ENCODE measurements at regions of chr9 and their contacts with region 1.

Region 1: GRCh38 chr9:27019589-27019988 is 14.1 kb upstream of the LRRC19 start:
- DNase-seq: peak; percentile 87
- ATAC-seq: peak; percentile 85
- H3K4me3 ChIP-seq: no peak overlapping the region
- H3K27ac ChIP-seq: no peak overlapping the region; the same call in 1 of the 2 replicates
- H3K4me1 ChIP-seq: no peaks in the 10 kb centered on the region
- H3K27me3 ChIP-seq: no peaks in the 10 kb centered on the region
- CTCF ChIP-seq: no peak
- POLR2A ChIP-seq: no peak
- RAD21 ChIP-seq: no peak

Region 2: DNA sequence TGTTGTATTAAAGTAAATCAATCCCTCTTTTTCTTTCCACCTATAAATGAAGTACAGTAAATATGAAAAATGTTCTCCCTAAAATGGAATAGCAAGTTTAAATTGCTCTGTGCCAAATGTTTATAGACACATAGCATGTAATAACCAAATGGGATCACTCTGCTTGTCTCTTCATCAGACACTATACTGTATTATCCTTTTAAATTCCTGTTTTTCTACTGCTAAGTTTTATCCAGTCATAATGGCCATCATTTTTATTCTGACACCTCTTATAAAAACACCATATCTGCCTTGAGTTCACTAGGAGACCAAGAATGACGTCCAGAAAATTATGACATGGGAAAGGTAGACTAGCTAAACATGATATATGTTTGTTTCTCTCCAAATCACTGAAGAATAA is 379.8 kb before region 1 on chr9:
- CTCF ChIA-PET with region 1: no interaction called
- POLR2A ChIA-PET with region 1: no interaction called
- dilution Hi-C with region 1: no loop called
- in situ Hi-C with region 1: no loop called
- intact Hi-C with region 1: no loop called
- DNase-seq: no peak
- ATAC-seq: no peak
- H3K4me3 ChIP-seq: no peak overlapping the region
- H3K27ac ChIP-seq: no peak overlapping the region
- H3K4me1 ChIP-seq: no peaks in the 10 kb centered on the region
- H3K27me3 ChIP-seq: no peaks in the 10 kb centered on the region
- CTCF ChIP-seq: no peak
- POLR2A ChIP-seq: no peak
- RAD21 ChIP-seq: no peak

Region 3: GRCh38 chr9:26955921-26956859 is 63.4 kb before region 1 on chr9 and contains the start of gene IFT74:
- CTCF ChIA-PET with region 1: no interaction called
- POLR2A ChIA-PET with region 1: no interaction called
- dilution Hi-C with region 1: no loop called
- in situ Hi-C with region 1: no loop called
- intact Hi-C with region 1: loop called (anchors 10 kb)
- DNase-seq: peak; percentile 98
- ATAC-seq: peak; percentile 100
- H3K4me3 ChIP-seq: peak within 1 kb of the TSS; percentile 67
- H3K27ac ChIP-seq: peak within 1 kb of the TSS; percentile 92
- H3K4me1 ChIP-seq: no peaks in the 10 kb centered on the region
- H3K27me3 ChIP-seq: no peaks in the 10 kb centered on the region
- CTCF ChIP-seq: no peak
- POLR2A ChIP-seq: peak; percentile 82
- RAD21 ChIP-seq: no peak
- total RNA-seq, gene IFT74: 11.9 and 12.2 TPM in 2 replicates

Region 4: DNA sequence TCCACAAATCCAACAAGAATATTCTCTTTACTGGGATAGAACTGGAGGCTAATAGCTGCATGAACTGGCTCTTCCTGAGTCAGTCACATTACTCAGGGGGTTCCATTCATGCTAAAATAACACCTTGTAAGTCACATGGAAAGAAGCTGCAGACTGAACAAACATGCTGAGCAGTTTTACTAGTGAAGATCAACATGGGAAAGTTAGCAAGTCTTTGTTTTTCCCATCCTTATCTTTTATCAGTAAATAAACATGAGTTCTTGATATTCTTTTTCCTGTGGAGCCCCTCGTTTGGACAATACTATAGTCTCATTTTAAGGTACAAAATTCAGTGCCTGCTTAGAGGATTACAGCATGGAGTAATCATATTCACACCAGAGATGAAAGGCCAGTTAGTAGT is 45.7 kb after region 1 on chr9:
- CTCF ChIA-PET with region 1: no interaction called
- POLR2A ChIA-PET with region 1: no interaction called
- dilution Hi-C with region 1: no loop called
- in situ Hi-C with region 1: no loop called
- intact Hi-C with region 1: no loop called
- DNase-seq: peak; percentile 31
- ATAC-seq: no peak
- H3K4me3 ChIP-seq: no peak overlapping the region
- H3K27ac ChIP-seq: no peak overlapping the region
- H3K4me1 ChIP-seq: peaks cover 2% of the 10 kb centered on the region
- H3K27me3 ChIP-seq: no peaks in the 10 kb centered on the region
- CTCF ChIP-seq: no peak
- POLR2A ChIP-seq: no peak
- RAD21 ChIP-seq: no peak